ENCODE measurements at regions of chr13 and their contacts with region 1.

Region 1: GRCh38 chr13:87570669-87571068 is 100.5 kb upstream of the SLITRK5 start:
- DNase-seq: no peak
- ATAC-seq: no peak
- H3K4me3 ChIP-seq: no peak overlapping the region
- H3K4me3 Mint-ChIP-seq: no peak overlapping the region
- H3K27ac ChIP-seq: no peak overlapping the region
- H3K27ac Mint-ChIP-seq: no peak overlapping the region
- H3K4me1 ChIP-seq: no peaks in the 10 kb centered on the region
- H3K4me1 Mint-ChIP-seq: no peaks in the 10 kb centered on the region
- H3K27me3 ChIP-seq: no peaks in the 10 kb centered on the region
- H3K27me3 Mint-ChIP-seq: no peaks in the 10 kb centered on the region

Region 2: DNA sequence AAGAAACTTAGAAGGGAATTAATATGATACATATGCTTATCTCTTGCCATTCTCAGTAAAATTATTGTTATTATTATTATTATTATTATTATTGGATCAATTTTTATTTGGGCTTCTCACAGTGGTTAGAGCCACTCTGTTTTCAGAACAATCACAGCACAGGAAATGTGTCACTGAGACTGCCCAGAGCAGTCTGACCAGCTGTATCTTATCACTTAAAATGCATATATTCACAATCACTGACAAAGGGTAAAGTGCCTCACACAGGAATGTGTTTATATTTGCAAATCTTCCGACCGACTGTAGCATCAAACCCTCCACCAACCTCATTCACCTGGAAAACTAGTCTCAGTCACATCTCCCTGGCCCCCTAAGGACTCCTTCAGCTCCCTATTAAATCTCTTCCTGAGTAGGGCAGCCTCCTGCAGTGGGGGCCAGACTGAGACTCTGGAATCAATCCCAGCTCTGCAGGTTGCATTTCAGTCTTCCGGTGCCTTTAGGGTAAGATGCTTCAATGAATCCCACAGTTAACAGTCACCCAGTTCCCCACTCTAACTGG is 637.8 kb before region 1 on chr13:
- CTCF ChIA-PET with region 1: no interaction called
- POLR2A ChIA-PET with region 1: interaction called in 1 of 2 experiments, 12 read pairs
- DNase-seq: no peak
- ATAC-seq: no peak
- H3K4me3 ChIP-seq: no peak overlapping the region
- H3K4me3 Mint-ChIP-seq: no peak overlapping the region
- H3K27ac ChIP-seq: no peak overlapping the region
- H3K27ac Mint-ChIP-seq: no peak overlapping the region
- H3K4me1 ChIP-seq: no peaks in the 10 kb centered on the region
- H3K4me1 Mint-ChIP-seq: no peaks in the 10 kb centered on the region
- H3K27me3 ChIP-seq: no peaks in the 10 kb centered on the region
- H3K27me3 Mint-ChIP-seq: no peaks in the 10 kb centered on the region

Measured in T-cell (primary cell).